CD4-positive, alpha-beta memory T cell (primary cell): ENCODE measurements at regions of chr13 and their contacts with region 1.

Region 1: GRCh38 chr13:99269627-99270241 is 11.6 kb upstream of the GPR18 start:
- DNase-seq: peak; percentile 57 to 71 (median 63)
- H3K4me3 ChIP-seq: no peak overlapping the region
- H3K4me3 Mint-ChIP-seq: peak overlapping the region in 2 of 8 donors; percentile 53 to 67
- H3K27ac ChIP-seq: peak overlapping the region; percentile 42
- H3K27ac Mint-ChIP-seq: peak overlapping the region; percentile 23 to 98 (median 92)
- H3K4me1 ChIP-seq: peaks cover 59% of the 10 kb centered on the region
- H3K4me1 Mint-ChIP-seq: peaks cover 43 to 72% (median 58%) of the 10 kb centered on the region in 4 donors
- H3K27me3 ChIP-seq: no peaks in the 10 kb centered on the region
- H3K27me3 Mint-ChIP-seq: no peaks in the 10 kb centered on the region

Region 2: DNA sequence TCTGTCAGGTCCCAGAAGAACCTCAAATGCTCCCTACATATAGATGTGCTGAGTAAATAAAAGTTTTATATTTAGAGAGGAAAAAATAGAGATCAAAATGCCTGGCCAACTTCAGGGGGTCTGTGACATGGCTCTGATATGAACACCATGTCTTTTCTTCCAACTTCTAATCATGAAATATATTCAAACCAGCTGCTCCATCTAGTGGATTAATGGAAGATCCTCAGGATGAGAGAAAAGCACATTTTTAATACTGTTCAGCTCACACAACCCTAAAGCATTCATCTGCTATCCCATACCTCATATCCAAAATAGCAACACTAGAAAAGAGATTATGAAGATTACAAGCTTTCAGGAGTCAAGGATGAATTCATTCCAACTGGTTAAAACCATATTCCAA is 235.9 kb before region 1 on chr13:
- CTCF ChIA-PET with region 1: interaction called, 14 read pairs
- POLR2A ChIA-PET with region 1: no interaction called
- intact Hi-C with region 1: loop called (anchors 5 kb)
- DNase-seq: peak in 2 of 5 donors; percentile 21 to 28
- H3K4me3 ChIP-seq: no peak overlapping the region
- H3K4me3 Mint-ChIP-seq: no peak overlapping the region
- H3K27ac ChIP-seq: no peak overlapping the region
- H3K27ac Mint-ChIP-seq: peak overlapping the region in 3 of 7 donors; percentile 55 to 85 (median 63)
- H3K4me1 ChIP-seq: peaks cover 22% of the 10 kb centered on the region
- H3K4me1 Mint-ChIP-seq: peaks cover 32 to 76% (median 51%) of the 10 kb centered on the region in 4 donors
- H3K27me3 ChIP-seq: no peaks in the 10 kb centered on the region
- H3K27me3 Mint-ChIP-seq: no peaks in the 10 kb centered on the region

Region 3: GRCh38 chr13:99237981-99238662 is 31.6 kb before region 1 on chr13:
- CTCF ChIA-PET with region 1: interaction called, 5 read pairs
- POLR2A ChIA-PET with region 1: interaction called, 3 read pairs
- intact Hi-C with region 1: loop called (anchors 2 kb)
- DNase-seq: peak in 3 of 5 donors; percentile 38 to 59 (median 42)
- H3K4me3 ChIP-seq: peak overlapping the region in 1 of 2 donors; percentile 55
- H3K4me3 Mint-ChIP-seq: peak overlapping the region; percentile 86 to 92 (median 88)
- H3K27ac ChIP-seq: peak overlapping the region; percentile 63
- H3K27ac Mint-ChIP-seq: peak overlapping the region; percentile 84 to 99 (median 97)
- H3K4me1 ChIP-seq: peaks cover 62% of the 10 kb centered on the region
- H3K4me1 Mint-ChIP-seq: peaks cover 39 to 71% (median 56%) of the 10 kb centered on the region in 4 donors
- H3K27me3 ChIP-seq: no peaks in the 10 kb centered on the region
- H3K27me3 Mint-ChIP-seq: no peaks in the 10 kb centered on the region

Region 4: GRCh38 chr13:99296398-99296797 is 26.7 kb after region 1 on chr13:
- CTCF ChIA-PET with region 1: interaction called, 217 read pairs
- POLR2A ChIA-PET with region 1: interaction called, 349 read pairs
- intact Hi-C with region 1: no loop called
- DNase-seq: peak; percentile 46 to 69 (median 59)
- H3K4me3 ChIP-seq: peak overlapping the region in 1 of 2 donors; percentile 8
- H3K4me3 Mint-ChIP-seq: peak overlapping the region; percentile 76 to 87 (median 86)
- H3K27ac ChIP-seq: peak overlapping the region; percentile 66
- H3K27ac Mint-ChIP-seq: peak overlapping the region; percentile 86 to 96 (median 94)
- H3K4me1 ChIP-seq: peaks cover 94% of the 10 kb centered on the region
- H3K4me1 Mint-ChIP-seq: peaks cover 58 to 92% (median 70%) of the 10 kb centered on the region in 4 donors
- H3K27me3 ChIP-seq: no peaks in the 10 kb centered on the region
- H3K27me3 Mint-ChIP-seq: no peaks in the 10 kb centered on the region

Region 5: DNA sequence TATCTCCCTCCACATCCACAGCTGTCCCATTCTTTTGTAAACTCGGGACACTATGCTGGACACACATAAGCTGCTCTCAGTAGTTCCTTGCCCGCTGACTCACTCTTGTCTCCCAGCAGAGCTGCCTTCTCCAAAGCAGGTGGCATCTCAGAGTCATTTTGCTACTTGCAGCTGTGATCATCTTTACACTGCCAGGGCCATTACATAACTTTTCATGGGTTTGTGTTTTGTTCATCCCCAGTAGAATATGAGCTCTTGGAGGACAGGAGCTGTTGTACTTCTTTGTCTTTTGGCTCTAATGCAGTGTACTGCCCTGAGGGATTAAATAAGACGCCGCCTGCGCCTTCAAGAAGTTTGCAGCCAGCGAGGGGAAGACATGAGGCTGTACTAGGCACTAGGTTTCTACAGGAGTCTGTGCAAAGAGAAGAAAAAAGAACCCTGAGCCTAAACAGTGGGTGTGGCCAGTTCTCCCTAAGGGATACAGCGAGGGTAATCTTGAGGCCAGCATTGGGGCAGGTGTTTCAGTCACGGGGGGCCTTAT is 78.2 kb after region 1 on chr13:
- CTCF ChIA-PET with region 1: interaction called, 42 read pairs
- POLR2A ChIA-PET with region 1: interaction called, 55 read pairs
- intact Hi-C with region 1: no loop called
- DNase-seq: no peak
- H3K4me3 ChIP-seq: no peak overlapping the region
- H3K4me3 Mint-ChIP-seq: peak overlapping the region in 5 of 8 donors; percentile 30 to 66 (median 56)
- H3K27ac ChIP-seq: peak overlapping the region; percentile 9
- H3K27ac Mint-ChIP-seq: peak overlapping the region; percentile 79 to 99 (median 94)
- H3K4me1 ChIP-seq: peaks cover 84% of the 10 kb centered on the region
- H3K4me1 Mint-ChIP-seq: peaks cover 79 to 98% (median 88%) of the 10 kb centered on the region in 4 donors
- H3K27me3 ChIP-seq: no peaks in the 10 kb centered on the region
- H3K27me3 Mint-ChIP-seq: no peaks in the 10 kb centered on the region

Region 6: DNA sequence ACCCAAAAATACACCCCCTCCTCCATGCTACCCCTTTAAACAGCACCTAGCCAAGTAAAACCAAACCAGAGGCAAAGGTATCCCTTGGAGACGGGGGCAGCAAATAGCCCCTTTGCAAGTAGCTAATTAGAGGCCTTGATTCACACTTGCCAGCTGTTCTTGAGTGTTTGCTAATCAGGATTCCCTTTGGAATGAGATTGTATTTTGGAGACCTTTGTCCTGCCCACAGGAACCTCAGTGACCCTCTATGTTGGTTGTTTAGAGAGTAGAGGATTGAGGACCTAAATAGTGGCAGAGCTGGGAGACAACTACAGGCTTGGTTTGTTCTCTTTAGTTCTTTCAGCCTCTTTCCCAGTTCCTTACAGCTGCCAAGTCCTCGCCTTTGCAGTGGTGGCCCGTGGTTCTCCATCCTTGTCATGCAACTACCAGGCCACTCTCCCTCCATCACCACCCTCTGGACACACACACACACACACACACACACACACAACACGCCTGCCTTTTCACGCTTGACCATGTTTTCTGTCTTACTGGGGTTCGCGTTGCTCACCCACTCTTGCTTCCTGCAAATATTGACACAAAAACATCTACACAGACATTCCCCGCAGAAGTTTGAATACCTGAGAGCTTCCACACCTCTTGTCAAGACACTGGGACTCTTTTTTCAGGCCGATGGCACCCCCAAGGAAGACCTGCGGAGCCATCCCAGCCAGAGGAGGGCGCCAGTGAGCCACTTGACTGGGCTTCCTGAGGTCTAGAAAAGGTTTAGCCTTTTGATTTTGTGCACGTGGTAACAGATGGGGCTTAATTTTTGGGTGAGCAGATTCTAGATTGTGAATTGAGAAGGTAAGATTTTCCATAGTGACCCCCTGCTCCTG is 117.4 kb after region 1 on chr13:
- CTCF ChIA-PET with region 1: interaction called, 315 read pairs
- POLR2A ChIA-PET with region 1: interaction called, 20 read pairs
- intact Hi-C with region 1: loop called (anchors 1 kb)
- DNase-seq: peak; percentile 78 to 84 (median 81)
- H3K4me3 ChIP-seq: no peak overlapping the region
- H3K4me3 Mint-ChIP-seq: peak overlapping the region; percentile 4 to 73 (median 54)
- H3K27ac ChIP-seq: peak overlapping the region; percentile 30
- H3K27ac Mint-ChIP-seq: peak overlapping the region; percentile 92 to 99 (median 96)
- H3K4me1 ChIP-seq: peaks cover 65% of the 10 kb centered on the region
- H3K4me1 Mint-ChIP-seq: peaks cover 46 to 70% (median 60%) of the 10 kb centered on the region in 4 donors
- H3K27me3 ChIP-seq: no peaks in the 10 kb centered on the region
- H3K27me3 Mint-ChIP-seq: no peaks in the 10 kb centered on the region

Region 7: DNA sequence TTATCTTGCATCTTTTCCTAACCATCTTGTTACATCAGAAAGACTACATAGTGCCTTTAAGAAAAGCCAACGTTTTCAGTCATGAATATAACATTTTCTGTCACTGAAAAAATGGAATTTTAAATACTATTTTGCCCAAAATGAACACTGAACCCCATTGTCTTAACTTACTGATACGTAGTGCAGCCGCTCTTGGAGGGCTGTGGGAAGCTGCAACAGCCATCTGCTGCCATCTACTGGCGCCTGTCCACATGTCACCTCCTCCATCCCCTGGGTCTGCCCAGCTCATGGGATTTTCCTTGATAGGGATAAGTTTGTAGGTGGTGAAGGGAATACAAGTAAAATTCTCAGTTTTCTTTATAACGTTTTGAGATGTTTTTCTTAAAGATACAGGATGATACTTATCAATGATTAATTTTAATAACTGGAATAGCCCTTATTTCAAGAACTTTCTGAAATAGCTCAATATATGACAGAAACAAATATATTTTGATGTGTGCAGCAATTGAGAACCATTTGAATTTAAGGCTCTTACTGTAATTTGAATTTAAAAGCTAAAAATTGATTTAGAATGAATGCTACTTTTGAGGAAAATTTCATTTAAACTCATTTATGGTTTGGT is 1245.2 kb after region 1 on chr13:
- CTCF ChIA-PET with region 1: no interaction called
- POLR2A ChIA-PET with region 1: no interaction called
- intact Hi-C with region 1: loop called (anchors 10 kb)
- DNase-seq: peak; percentile 63 to 71 (median 67)
- H3K4me3 ChIP-seq: no peak overlapping the region
- H3K4me3 Mint-ChIP-seq: no peak overlapping the region
- H3K27ac ChIP-seq: no peak overlapping the region
- H3K27ac Mint-ChIP-seq: no peak overlapping the region
- H3K4me1 ChIP-seq: peaks cover 20% of the 10 kb centered on the region
- H3K4me1 Mint-ChIP-seq: peaks cover 9 to 21% (median 18%) of the 10 kb centered on the region in 4 donors
- H3K27me3 ChIP-seq: no peaks in the 10 kb centered on the region
- H3K27me3 Mint-ChIP-seq: no peaks in the 10 kb centered on the region